Transverse colon (tissue), 4 donors: ENCODE measurements at regions of chr2 and their contacts with region 1.

Region 1: DNA sequence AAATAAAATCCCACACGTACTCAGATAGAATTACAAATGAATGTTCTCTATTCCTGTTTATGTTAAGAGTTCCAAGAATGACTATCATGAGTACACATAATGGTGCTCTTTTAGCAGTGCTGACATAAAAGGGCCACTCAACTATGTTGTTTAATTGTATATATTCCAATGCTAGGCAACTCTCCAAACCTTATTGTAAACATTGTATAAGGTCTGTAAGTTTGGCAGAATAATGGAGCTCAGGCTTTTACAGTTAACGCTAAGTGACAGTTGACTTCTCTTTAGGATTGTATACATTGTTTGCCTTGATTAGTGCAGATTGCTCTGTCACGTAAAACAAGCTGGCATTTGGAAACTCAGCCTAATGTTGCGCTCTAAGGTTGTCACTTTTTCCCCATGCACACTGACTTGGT is 20.8 kb downstream of the RBMS1 start:
- DNase-seq: no peak
- H3K4me3 ChIP-seq: no peak overlapping the region
- H3K27ac ChIP-seq: peak overlapping the region; percentile 49 to 75 (median 63)
- H3K4me1 ChIP-seq: peaks cover 17 to 42% (median 19%) of the 10 kb centered on the region in 4 donors
- H3K27me3 ChIP-seq: no peaks in the 10 kb centered on the region
- CTCF ChIP-seq: no peak
- EP300 ChIP-seq: no peak
- POLR2A ChIP-seq: no peak

Region 2: GRCh38 chr2:160411167-160411566 is 61.7 kb before region 1 on chr2:
- in situ Hi-C with region 1: loop called in 1 of 4 experiments (anchors 10 kb)
- intact Hi-C with region 1: no loop called
- DNase-seq: no peak
- H3K4me3 ChIP-seq: no peak overlapping the region
- H3K27ac ChIP-seq: peak overlapping the region in 3 of 4 donors; percentile 23 to 47 (median 35)
- H3K4me1 ChIP-seq: peaks cover 0 to 41% (median 16%) of the 10 kb centered on the region in 4 donors
- H3K27me3 ChIP-seq: peaks cover 56% of the 10 kb centered on the region
- CTCF ChIP-seq: no peak
- EP300 ChIP-seq: no peak
- POLR2A ChIP-seq: no peak

Region 3: GRCh38 chr2:160429248-160430000 is 43.4 kb before region 1 on chr2:
- in situ Hi-C with region 1: no loop called
- intact Hi-C with region 1: loop called (anchors 10 kb)
- DNase-seq: no peak
- H3K4me3 ChIP-seq: no peak overlapping the region
- H3K27ac ChIP-seq: peak overlapping the region; percentile 59 to 79 (median 74)
- H3K4me1 ChIP-seq: peaks cover 0 to 62% (median 19%) of the 10 kb centered on the region in 4 donors
- H3K27me3 ChIP-seq: peaks cover 57% of the 10 kb centered on the region
- CTCF ChIP-seq: peak; percentile 55 to 71 (median 60)
- EP300 ChIP-seq: no peak
- POLR2A ChIP-seq: no peak